Esophagus muscularis mucosa (tissue), 4 donors: ENCODE measurements at regions of chr1 and their contacts with region 1.

Region 1: DNA sequence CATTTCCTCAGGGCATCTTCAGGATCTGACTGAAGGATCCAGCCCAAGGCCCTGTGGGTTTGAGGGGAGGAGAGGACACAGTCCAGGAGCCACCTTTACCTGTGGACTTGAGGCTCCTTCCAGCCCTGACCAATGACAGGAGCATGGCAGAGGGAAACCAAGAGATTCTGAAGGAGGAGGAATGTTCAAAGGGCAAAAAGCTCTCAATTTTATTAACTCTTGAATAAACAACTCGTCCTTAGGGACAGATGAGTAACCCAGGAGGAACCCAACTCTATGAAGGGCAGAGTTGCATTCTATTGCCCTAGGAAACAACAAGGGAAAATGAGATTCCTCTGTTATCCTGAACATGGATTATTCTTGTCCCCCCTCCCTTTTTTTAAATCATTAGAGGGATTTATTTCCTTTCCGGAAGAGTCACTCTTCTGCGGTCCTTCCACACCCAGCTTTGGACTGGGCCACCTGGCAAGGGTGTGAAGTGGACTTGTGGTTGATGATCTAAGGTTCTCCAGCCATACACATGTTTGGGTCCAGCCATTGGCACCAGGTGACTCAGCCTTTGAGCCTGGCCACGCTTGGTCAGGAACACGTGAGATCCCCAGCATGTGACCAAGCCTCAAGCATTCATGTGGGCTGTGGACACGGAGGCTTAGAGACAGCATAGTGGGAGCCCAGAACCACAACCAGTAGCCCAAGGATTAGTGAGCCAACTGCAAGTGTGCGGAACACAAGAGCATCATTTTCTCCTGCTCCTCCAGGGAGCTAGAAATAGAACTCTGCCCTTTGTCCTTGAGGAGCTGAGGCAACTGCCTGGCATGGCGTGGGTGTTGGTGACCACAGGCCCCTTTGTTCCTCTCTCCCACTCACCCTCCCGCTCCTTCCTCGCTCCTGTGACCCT is 49.9 kb downstream of the NENF start:
- DNase-seq: no peak
- H3K4me3 ChIP-seq: no peak overlapping the region
- H3K27ac ChIP-seq: no peak overlapping the region
- H3K4me1 ChIP-seq: peaks cover 0 to 14% (median 7%) of the 10 kb centered on the region in 4 donors
- H3K27me3 ChIP-seq: no peaks in the 10 kb centered on the region
- CTCF ChIP-seq: no peak
- EP300 ChIP-seq: no peak
- POLR2A ChIP-seq: no peak

Region 2: GRCh38 chr1:212558693-212559480 is 76.3 kb after region 1 on chr1:
- intact Hi-C with region 1: loop called (anchors 5 kb)
- DNase-seq: peak; percentile 97
- H3K4me3 ChIP-seq: peak overlapping the region; percentile 75 to 87 (median 78)
- H3K27ac ChIP-seq: peak overlapping the region; percentile 85 to 96 (median 91)
- H3K4me1 ChIP-seq: peaks cover 14 to 30% (median 24%) of the 10 kb centered on the region in 4 donors
- H3K27me3 ChIP-seq: no peaks in the 10 kb centered on the region
- CTCF ChIP-seq: no peak
- EP300 ChIP-seq: peak; percentile 94
- POLR2A ChIP-seq: peak; percentile 58